Activated T-helper 2 cell treated with anti-CD3 and anti-CD28 coated beads, Interferon-gamma antibody, Interleukin-2, Interleukin-4, amounts not matched to agents 10 μg/mL and 5 μg/mL and 100 μg/mL, durations not matched to agents 14 hours and 24 hours and 36 hours (primary cell): ENCODE measurements at regions of chr6 and their contacts with region 1.

Region 1: DNA sequence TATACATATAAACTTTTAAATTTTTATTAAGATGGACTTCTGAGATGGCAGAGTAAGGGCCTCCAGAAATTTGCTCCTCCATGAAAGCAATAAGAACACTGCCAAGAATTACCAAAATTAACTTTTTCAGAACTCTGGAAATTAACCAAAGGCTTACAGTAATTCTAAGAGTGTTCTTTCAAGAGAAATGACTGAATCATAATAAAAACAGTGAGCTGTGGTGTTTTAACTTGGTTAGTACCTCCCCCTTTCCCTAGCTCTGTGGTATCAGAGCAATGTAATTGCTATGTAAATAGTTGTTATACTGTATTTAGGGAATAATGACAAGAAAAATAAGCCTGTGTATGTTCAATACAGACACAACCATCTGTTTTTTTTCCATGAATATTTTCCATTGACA is 19.0 kb downstream of the HECA start:
- DNase-seq: no peak
- H3K4me3 Mint-ChIP-seq: peak overlapping the region; percentile 15
- H3K27ac Mint-ChIP-seq: peak overlapping the region; percentile 73
- H3K4me1 Mint-ChIP-seq: peaks cover 69% of the 10 kb centered on the region
- H3K27me3 Mint-ChIP-seq: no peaks in the 10 kb centered on the region

Region 2: GRCh38 chr6:138944412-138944811 is 209.4 kb before region 1 on chr6:
- intact Hi-C with region 1: loop called (anchors 5 kb)
- DNase-seq: no peak
- H3K4me3 Mint-ChIP-seq: no peak overlapping the region
- H3K27ac Mint-ChIP-seq: no peak overlapping the region
- H3K4me1 Mint-ChIP-seq: peaks cover 46% of the 10 kb centered on the region
- H3K27me3 Mint-ChIP-seq: no peaks in the 10 kb centered on the region

Region 3: DNA sequence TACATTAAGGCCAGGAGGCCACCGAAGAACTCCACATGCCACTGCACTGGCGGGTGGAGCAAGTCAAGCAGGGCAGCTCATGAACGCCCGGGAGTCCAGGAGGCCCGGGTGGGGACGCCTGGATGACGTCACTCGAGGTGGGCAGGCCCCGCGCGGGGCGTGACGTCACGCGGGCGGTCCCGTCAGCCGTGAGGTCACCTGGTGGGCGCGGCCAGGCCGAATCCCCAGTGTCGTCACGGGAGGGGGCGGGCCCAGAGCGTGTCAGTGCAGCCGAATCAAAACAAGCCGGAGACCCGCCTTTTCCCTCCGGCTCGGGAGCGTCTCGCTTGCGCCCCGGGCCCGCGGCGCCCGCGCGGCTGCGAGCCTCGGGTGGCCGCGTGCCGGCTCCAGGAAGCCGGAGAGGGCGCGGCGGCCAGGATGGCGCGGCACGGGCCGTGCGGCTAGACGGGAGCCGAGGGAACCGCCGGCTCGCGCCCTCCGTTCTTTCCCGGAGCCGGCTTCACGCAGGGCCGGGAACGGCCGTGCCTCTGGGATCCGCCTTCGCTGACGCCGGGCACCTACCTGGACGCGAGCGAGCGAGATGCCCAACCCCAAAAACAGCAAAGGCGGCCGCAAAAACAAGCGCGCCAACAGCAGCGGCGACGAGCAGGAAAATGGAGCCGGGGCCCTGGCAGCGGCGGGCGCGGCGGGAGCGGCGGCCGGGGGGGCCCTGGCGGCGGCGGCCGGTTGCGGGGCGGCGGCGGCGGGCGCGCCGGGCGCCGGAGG is 18.9 kb before region 1 on chr6 and contains the start of gene HECA:
- intact Hi-C with region 1: loop called (anchors 1 kb)
- DNase-seq: peak; percentile 96
- H3K4me3 Mint-ChIP-seq: peak within 1 kb of the TSS; percentile 81
- H3K27ac Mint-ChIP-seq: peak within 1 kb of the TSS; percentile 85
- H3K4me1 Mint-ChIP-seq: peaks cover 60% of the 10 kb centered on the region
- H3K27me3 Mint-ChIP-seq: no peaks in the 10 kb centered on the region
- total RNA-seq, gene HECA: 33.6 and 36.9 TPM in 2 replicates

Region 4: DNA sequence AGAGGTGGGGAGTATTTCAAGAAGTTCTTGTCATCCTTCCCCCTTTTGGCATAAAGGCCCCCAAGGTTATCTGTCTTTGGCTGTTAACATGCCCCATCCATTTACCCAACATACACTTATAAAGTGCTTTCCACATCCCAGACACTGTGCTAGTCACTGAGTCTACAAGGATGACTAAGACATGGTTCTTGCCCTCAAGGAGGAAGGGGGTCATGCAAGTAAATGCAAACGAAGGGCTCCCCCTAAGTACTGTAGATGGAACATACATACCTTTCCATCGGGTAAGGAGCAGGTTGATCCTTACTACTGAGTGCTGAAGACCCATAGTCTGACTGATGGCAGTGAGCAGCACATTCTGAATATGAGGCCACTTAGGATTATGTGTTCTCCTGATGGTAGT is 19.3 kb after region 1 on chr6:
- intact Hi-C with region 1: loop called (anchors 2 kb)
- DNase-seq: no peak
- H3K4me3 Mint-ChIP-seq: no peak overlapping the region
- H3K27ac Mint-ChIP-seq: peak overlapping the region; percentile 70
- H3K4me1 Mint-ChIP-seq: peaks cover 73% of the 10 kb centered on the region
- H3K27me3 Mint-ChIP-seq: no peaks in the 10 kb centered on the region